ENCODE measurements at regions of chr1 and their contacts with region 1.

Region 1: GRCh38 chr1:204516180-204516879 is at the start of gene MDM4:
- DNase-seq: peak; percentile 93 to 96 (median 94)
- H3K4me3 ChIP-seq: peak within 1 kb of the TSS; percentile 67 to 72
- H3K4me3 Mint-ChIP-seq: no peak within 1 kb of the TSS
- H3K27ac ChIP-seq: peak within 1 kb of the TSS; percentile 98
- H3K27ac Mint-ChIP-seq: peak within 1 kb of the TSS in 1 of 7 donors; percentile 71
- H3K4me1 ChIP-seq: peaks cover 89% of the 10 kb centered on the region
- H3K4me1 Mint-ChIP-seq: peaks cover 30 to 73% (median 38%) of the 10 kb centered on the region in 4 donors
- H3K27me3 ChIP-seq: no peaks in the 10 kb centered on the region
- H3K27me3 Mint-ChIP-seq: no peaks in the 10 kb centered on the region
- total RNA-seq, gene MDM4: 213 to 237 TPM

Region 2: GRCh38 chr1:204411451-204412204 is 104.7 kb before region 1 on chr1 and contains the start of gene PPP1R15B:
- CTCF ChIA-PET with region 1: no interaction called
- POLR2A ChIA-PET with region 1: interaction called, 15 read pairs
- intact Hi-C with region 1: loop called (anchors 1 kb)
- DNase-seq: peak; percentile 98 to 99 (median 98)
- H3K4me3 ChIP-seq: peak within 1 kb of the TSS; percentile 67 to 99
- H3K4me3 Mint-ChIP-seq: peak within 1 kb of the TSS; percentile 98 to 99 (median 99)
- H3K27ac ChIP-seq: peak within 1 kb of the TSS; percentile 100
- H3K27ac Mint-ChIP-seq: peak within 1 kb of the TSS; percentile 99 to 100 (median 100)
- H3K4me1 ChIP-seq: peaks cover 7% of the 10 kb centered on the region
- H3K4me1 Mint-ChIP-seq: peaks cover 8 to 21% (median 13%) of the 10 kb centered on the region in 4 donors
- H3K27me3 ChIP-seq: no peaks in the 10 kb centered on the region
- H3K27me3 Mint-ChIP-seq: no peaks in the 10 kb centered on the region
- total RNA-seq, gene PPP1R15B: 78.0 to 81.1 TPM

Region 3: DNA sequence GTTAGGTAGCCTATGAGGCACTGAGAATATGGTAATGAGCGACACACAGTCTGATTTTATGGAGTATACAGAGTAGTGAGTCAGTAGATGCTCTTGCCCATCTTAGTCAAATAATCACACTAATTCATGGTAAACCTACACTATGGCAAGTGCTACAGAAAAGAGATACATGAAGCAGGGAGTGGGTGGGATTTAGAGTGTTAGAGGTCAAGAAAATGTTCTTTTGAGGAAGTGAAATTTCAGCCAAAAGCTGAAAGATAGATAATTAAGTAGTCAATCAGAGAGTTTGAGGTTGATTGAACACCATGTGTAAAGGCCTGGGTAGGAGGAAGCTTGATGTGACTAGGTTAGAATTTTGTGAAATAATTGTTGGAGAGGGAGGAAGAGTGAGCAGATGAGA is 14.6 kb after region 1 on chr1:
- CTCF ChIA-PET with region 1: interaction called, 9 read pairs
- POLR2A ChIA-PET with region 1: interaction called, 23 read pairs
- intact Hi-C with region 1: no loop called
- DNase-seq: no peak
- H3K4me3 ChIP-seq: no peak overlapping the region
- H3K4me3 Mint-ChIP-seq: no peak overlapping the region
- H3K27ac ChIP-seq: no peak overlapping the region
- H3K27ac Mint-ChIP-seq: peak overlapping the region in 5 of 7 donors; percentile 1 to 85 (median 46)
- H3K4me1 ChIP-seq: no peaks in the 10 kb centered on the region
- H3K4me1 Mint-ChIP-seq: peaks cover 10 to 17% (median 13%) of the 10 kb centered on the region in 4 donors
- H3K27me3 ChIP-seq: no peaks in the 10 kb centered on the region
- H3K27me3 Mint-ChIP-seq: no peaks in the 10 kb centered on the region

Region 4: DNA sequence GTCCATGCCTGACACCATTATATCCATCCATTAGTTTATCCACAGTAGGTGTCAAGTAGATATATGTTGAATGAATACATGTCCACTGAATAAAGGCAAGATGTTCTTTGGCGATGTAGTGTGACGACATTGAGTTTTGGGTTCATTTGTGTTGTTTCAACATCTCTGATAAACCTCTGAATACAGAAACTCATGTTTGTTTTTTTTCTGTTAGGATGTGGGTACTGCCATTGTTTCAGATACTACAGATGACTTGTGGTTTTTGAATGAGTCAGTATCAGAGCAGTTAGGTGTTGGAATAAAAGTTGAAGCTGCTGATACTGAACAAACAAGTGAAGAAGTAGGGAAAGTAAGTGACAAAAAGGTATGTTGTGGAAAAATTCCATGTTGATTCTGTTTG is 28.0 kb after region 1 on chr1:
- CTCF ChIA-PET with region 1: interaction called, 8 read pairs
- POLR2A ChIA-PET with region 1: interaction called, 178 read pairs
- intact Hi-C with region 1: loop called (anchors 2 kb)
- DNase-seq: peak; percentile 51 to 72 (median 62)
- H3K4me3 ChIP-seq: no peak overlapping the region
- H3K4me3 Mint-ChIP-seq: peak overlapping the region; percentile 11 to 80 (median 53)
- H3K27ac ChIP-seq: peak overlapping the region; percentile 56
- H3K27ac Mint-ChIP-seq: peak overlapping the region; percentile 25 to 88 (median 76)
- H3K4me1 ChIP-seq: peaks cover 51% of the 10 kb centered on the region
- H3K4me1 Mint-ChIP-seq: peaks cover 34 to 60% (median 47%) of the 10 kb centered on the region in 4 donors
- H3K27me3 ChIP-seq: no peaks in the 10 kb centered on the region
- H3K27me3 Mint-ChIP-seq: no peaks in the 10 kb centered on the region

Region 5: DNA sequence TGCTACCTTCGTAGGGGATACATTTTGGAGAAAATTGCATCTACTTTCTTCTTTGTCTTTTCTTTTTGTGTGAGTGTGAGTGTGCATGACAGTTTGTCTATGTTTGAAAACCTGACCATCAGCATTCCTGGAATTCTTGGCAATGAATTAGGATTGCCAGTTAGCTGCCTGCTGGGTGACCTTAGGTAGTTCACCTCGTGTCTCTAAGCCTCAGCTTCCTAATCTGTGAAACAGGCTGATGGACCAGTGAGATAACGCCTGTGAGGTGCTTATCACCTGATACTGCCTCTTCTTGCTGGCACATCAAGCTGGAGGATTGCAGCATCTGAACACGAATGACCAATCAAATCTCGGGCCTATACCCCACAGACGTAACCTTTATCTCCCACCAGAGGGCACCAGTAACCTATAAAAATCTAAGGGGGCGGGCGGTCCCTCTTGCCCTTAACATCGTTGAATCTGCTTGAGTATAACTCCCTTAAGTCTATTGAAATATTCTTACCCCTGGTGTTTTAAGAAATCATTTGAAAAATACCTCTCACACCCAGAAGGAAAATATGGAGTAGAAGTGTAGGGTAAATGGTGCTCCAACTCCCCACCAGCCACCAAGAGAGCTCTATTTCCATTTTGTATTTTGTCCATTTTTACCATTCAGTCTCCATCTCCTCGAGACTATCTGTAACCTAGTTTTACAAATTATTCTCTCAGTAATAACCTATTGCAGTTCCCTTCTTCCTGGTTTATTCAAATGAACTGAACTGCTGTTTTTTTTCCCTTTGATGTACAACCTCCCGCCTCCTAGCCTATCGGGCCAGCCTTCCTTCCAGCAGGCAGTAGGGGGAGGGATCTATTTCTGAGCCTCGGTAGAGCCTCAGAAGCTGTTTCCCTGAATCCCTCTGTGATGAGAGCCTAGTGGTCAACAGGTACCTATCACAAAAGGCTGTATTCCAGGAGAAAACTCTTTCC is 49.6 kb after region 1 on chr1:
- CTCF ChIA-PET with region 1: interaction called, 18 read pairs
- POLR2A ChIA-PET with region 1: interaction called, 12 read pairs
- intact Hi-C with region 1: loop called (anchors 5 kb)
- DNase-seq: peak; percentile 68 to 80 (median 70)
- H3K4me3 ChIP-seq: no peak overlapping the region
- H3K4me3 Mint-ChIP-seq: peak overlapping the region in 4 of 8 donors; percentile 14 to 47 (median 32)
- H3K27ac ChIP-seq: no peak overlapping the region
- H3K27ac Mint-ChIP-seq: peak overlapping the region; percentile 68 to 93 (median 79)
- H3K4me1 ChIP-seq: peaks cover 36% of the 10 kb centered on the region
- H3K4me1 Mint-ChIP-seq: peaks cover 32 to 49% (median 39%) of the 10 kb centered on the region in 4 donors
- H3K27me3 ChIP-seq: no peaks in the 10 kb centered on the region
- H3K27me3 Mint-ChIP-seq: no peaks in the 10 kb centered on the region

Measured in CD4-positive, alpha-beta memory T cell (primary cell).